Calu3 (cell line): ENCODE measurements at regions of chr10 and their contacts with region 1.

Region 1: DNA sequence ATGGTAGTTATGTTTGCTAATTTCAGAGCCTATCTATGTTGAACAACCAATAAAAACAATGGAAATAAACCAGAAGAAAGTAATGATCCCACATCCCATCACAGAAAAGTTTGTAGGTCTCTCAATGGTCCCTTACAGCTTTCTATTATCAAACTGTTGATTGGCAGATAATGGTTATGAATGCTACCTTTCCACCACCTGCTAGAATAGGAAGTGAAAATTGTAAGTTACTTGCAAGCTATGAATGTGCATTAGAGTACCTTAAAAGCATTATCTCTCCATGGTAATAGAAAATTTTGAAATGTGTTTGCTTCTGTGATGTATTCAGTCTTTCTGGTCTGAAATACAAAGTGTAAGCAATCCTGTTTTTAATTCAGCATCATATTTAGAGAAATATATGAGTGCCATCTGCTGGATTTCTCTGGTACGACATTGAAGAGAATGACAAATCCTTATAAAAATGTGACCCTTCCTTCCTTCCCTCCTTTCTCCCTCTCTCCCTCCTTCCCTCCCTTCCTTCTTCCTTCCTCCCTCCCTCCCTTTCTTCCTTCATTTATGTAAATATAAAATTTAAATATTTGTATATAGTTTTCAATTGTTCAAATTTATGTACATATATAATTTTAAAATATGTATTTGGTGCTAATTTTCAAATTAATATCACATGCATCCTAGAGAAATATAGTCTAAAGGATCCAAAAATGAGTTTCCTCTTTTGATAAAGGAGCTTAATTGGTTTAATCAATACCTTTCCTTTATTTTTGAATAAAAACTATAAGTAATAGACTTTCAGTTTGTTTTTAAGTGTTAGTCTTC is 41.4 kb upstream of the PNLIPRP3 start:
- DNase-seq: peak; percentile 5
- H3K4me3 Mint-ChIP-seq: no peak overlapping the region
- H3K27ac Mint-ChIP-seq: no peak overlapping the region
- H3K4me1 Mint-ChIP-seq: no peaks in the 10 kb centered on the region
- H3K27me3 Mint-ChIP-seq: peaks cover 24% of the 10 kb centered on the region
- CTCF ChIP-seq: peak; percentile 18

Region 2: DNA sequence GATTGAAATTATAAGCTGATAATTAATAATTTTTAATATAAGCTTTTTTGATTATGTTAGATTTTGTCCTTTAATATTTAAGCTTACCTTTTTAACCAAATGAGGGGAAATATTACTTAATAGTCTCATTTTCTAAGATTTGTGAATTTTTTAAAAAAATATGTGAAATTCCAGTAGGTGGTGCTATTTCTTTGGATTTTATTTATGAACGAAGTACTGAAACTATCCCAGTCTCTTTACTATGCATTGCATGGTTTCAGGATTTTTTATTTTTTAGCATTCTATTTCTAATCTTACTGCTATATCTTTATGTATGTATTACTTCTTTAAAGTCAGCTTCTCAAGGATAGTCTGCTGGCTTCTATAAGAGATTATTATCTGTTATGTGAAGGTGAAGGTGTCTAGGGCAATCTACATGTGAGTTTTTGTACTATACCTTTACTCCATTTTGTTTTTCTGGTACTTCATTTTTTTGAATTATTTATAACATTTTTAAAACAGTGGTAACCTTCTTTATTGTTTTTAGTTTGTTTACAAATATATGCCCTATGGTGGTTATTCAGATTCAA is 1214.7 kb before region 1 on chr10:
- CTCF ChIA-PET with region 1: no interaction called
- intact Hi-C with region 1: loop called (anchors 10 kb)
- DNase-seq: no peak
- H3K4me3 Mint-ChIP-seq: no peak overlapping the region
- H3K27ac Mint-ChIP-seq: no peak overlapping the region
- H3K4me1 Mint-ChIP-seq: peaks cover 9% of the 10 kb centered on the region
- H3K27me3 Mint-ChIP-seq: no peaks in the 10 kb centered on the region
- CTCF ChIP-seq: peak; percentile 13

Region 3: DNA sequence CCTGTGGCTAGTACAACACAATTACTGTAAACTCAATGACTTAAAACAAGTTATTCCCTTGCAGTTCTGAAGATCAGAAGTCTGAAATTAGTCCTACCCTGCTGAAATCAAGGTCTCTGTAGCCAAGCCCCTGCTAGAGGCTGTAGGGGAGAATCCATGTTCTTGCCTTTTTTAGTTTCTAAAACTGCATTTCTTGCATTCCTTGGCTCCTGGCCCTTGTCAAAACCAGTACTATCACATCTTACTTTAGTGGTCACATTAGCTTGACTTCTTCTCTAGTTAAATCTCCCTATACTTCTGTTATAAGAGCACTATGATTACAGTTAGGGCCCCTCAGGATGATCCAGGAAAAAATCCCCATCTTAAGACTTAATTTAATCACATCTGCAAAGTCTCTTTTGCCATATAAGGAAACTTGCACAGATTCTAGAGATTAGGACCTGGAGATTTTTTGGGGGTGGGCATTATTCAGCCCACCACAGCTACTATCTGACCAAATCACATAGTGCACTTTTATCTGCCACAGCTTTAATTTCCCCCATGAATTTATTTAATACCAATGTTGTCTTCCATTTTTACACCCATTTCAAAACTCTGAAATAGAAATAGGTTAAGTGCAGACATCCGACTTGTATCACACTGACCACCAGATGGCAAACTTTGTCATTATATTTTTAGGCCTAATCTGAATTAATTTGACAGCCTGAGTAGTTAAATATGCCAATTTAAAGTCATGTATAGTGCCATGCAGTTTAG is 680.0 kb before region 1 on chr10:
- CTCF ChIA-PET with region 1: no interaction called
- intact Hi-C with region 1: loop called (anchors 1 kb)
- DNase-seq: peak; percentile 2
- H3K4me3 Mint-ChIP-seq: no peak overlapping the region
- H3K27ac Mint-ChIP-seq: no peak overlapping the region
- H3K4me1 Mint-ChIP-seq: no peaks in the 10 kb centered on the region
- H3K27me3 Mint-ChIP-seq: no peaks in the 10 kb centered on the region
- CTCF ChIP-seq: no peak

Region 4: DNA sequence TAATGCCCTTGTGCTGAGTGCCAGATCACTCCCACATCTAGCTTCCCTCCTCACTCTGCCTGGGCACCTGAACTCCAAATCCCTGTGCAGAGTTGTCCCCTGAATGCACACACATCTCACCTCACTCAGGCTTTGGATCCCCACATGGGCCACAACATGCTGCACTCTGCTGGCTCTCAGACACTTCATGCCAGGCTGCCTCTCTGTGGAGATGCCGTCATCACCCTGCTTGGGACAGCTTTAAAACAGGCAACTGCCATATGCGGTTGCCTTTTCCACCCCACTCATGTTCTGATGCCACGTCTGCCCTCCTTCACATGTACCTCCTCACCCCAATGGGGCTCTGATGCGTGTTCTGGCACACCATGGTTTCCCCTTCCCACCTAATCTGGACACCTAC is 590.2 kb before region 1 on chr10:
- CTCF ChIA-PET with region 1: no interaction called
- intact Hi-C with region 1: loop called (anchors 5 kb)
- DNase-seq: no peak
- H3K4me3 Mint-ChIP-seq: no peak overlapping the region
- H3K27ac Mint-ChIP-seq: no peak overlapping the region
- H3K4me1 Mint-ChIP-seq: no peaks in the 10 kb centered on the region
- H3K27me3 Mint-ChIP-seq: no peaks in the 10 kb centered on the region
- CTCF ChIP-seq: no peak